Panc1 (cell line): ENCODE measurements at regions of chr2 and their contacts with region 1.

Region 1: DNA sequence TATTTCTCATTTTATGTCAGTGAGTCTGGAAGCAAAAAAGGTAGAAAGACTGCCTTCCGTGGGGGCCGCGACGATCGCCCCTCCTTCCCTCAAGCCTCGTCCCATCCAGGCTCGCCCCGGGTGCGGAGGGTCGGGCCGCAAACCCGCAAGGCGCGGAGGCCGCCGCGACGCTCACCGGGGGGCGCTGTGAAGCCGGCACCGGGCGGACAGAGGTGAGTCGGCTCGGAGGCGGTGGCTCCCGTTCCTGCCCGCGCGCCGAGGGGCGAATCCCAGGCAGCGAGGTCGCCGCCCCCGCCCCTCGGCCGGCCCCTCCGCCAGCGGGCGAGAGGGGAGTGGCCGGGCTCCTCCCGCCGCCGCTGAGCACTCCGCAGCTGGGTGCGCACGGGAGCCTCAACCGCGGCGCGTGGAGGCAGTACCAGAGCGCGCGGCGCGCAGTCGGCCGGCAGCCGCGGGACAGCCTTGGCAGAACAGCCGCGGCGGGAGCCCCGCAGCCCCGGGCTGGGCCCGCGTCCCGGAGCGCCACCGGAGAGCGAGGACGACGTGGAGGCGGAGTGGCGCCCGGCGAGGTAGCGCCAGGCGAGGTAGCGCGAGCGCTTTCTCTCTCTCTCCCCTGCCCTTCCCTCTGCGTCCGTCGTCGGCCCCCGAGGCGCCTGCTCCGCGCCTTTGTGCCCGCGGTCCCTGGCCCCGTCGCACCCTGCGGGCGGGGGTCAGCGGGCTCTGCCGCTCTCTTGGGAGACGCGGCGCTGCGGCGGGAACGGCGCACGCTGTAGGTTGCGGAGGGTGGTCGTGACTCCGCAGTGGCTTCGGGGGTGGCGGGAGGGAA is at the start of gene MYO1B:
- DNase-seq: no peak
- ATAC-seq: peak; percentile 94
- H3K4me3 ChIP-seq: peak within 1 kb of the TSS; percentile 83
- H3K27ac ChIP-seq: peak within 1 kb of the TSS; percentile 86
- H3K4me1 ChIP-seq: peaks cover 35% of the 10 kb centered on the region
- H3K27me3 ChIP-seq: no peaks in the 10 kb centered on the region
- CTCF ChIP-seq: peak; percentile 91
- total RNA-seq, gene MYO1B: 51.5 TPM

Region 2: GRCh38 chr2:189762551-189763298 is 1482.5 kb before region 1 on chr2 and contains the start of gene OSGEPL1:
- CTCF ChIA-PET with region 1: no interaction called
- POLR2A ChIA-PET with region 1: interaction called, 10 read pairs
- in situ Hi-C with region 1: no loop called
- intact Hi-C with region 1: no loop called
- DNase-seq: peak; percentile 88
- ATAC-seq: peak; percentile 99
- H3K4me3 ChIP-seq: peak within 1 kb of the TSS; percentile 82 to 90
- H3K27ac ChIP-seq: peak within 1 kb of the TSS; percentile 99
- H3K4me1 ChIP-seq: peaks cover 11% of the 10 kb centered on the region; the same call in 1 of the 2 replicates
- H3K27me3 ChIP-seq: no peaks in the 10 kb centered on the region
- CTCF ChIP-seq: peak; percentile 73
- total RNA-seq, gene OSGEPL1: 6.3 TPM

Region 3: DNA sequence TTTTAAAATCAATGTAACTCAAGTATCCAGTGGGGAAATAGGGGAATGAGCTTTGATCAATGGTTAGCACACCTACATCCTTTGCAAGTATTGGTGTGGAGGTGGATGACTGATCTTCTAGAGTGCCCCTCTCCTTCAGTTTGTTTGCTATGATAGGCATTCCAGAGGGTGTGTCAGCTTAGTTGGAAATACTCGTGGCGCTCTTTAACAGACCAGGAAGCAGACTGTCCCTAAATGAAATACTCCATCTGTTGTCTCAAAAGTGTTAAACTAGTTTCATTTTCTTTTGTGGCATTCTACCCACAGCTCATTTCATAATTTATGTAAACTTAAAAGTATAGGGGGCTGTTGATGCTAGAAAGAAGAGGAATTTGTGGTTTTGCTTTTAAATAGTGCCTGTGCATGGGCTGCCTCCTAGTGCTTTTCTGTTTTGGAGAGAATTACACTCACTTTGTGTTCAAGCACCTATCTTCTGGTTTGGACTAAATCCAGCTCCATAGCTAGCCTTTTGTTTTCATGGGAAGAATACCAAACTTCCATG is 297.5 kb before region 1 on chr2:
- CTCF ChIA-PET with region 1: no interaction called
- POLR2A ChIA-PET with region 1: no interaction called
- in situ Hi-C with region 1: no loop called
- intact Hi-C with region 1: no loop called
- DNase-seq: no peak
- ATAC-seq: peak; percentile 39; the same call in 1 of the 2 replicates
- H3K4me3 ChIP-seq: no peak overlapping the region
- H3K27ac ChIP-seq: no peak overlapping the region; the same call in 1 of the 2 replicates
- H3K4me1 ChIP-seq: peaks cover 8% of the 10 kb centered on the region; the same call in 1 of the 2 replicates
- H3K27me3 ChIP-seq: no peaks in the 10 kb centered on the region
- CTCF ChIP-seq: no peak

Region 4: GRCh38 chr2:191202881-191203397 is 42.3 kb before region 1 on chr2:
- CTCF ChIA-PET with region 1: no interaction called
- POLR2A ChIA-PET with region 1: no interaction called
- in situ Hi-C with region 1: no loop called
- intact Hi-C with region 1: no loop called
- DNase-seq: no peak
- ATAC-seq: no peak
- H3K4me3 ChIP-seq: no peak overlapping the region
- H3K27ac ChIP-seq: no peak overlapping the region
- H3K4me1 ChIP-seq: no peaks in the 10 kb centered on the region
- H3K27me3 ChIP-seq: no peaks in the 10 kb centered on the region
- CTCF ChIP-seq: no peak

Region 5: DNA sequence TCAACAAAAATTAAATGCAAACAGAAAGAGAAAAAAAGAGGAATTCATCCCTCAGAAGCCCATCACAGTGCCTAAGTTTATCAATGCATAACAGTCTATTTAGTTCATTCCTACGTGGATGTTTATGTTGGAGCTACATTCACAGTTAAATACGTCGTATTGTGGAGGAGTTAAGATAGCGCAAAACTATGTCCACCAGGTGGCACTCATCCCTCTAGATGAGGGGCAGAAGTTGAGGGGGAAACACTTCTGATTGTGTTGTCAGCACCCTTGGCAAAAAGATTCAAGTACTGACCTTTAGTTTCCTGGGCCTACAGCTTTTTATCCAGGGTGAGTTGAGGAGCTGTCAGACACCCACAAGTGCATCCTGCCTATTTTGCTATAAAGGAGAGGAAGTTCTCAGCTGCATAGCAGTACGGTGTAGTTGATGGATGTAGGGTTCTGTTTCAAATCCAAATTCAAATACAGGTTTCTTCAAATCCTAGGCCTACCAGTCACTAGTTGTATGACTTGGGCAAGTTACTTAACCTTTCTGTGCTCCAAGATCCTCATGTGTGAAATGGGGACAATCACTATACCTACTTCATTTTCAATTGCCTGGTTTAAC is 26.9 kb before region 1 on chr2:
- CTCF ChIA-PET with region 1: interaction called, 8 read pairs
- POLR2A ChIA-PET with region 1: no interaction called
- in situ Hi-C with region 1: no loop called
- intact Hi-C with region 1: loop called (anchors 2 kb)
- DNase-seq: peak; percentile 88
- ATAC-seq: peak; percentile 75
- H3K4me3 ChIP-seq: no peak overlapping the region
- H3K27ac ChIP-seq: peak overlapping the region; percentile 75
- H3K4me1 ChIP-seq: peaks cover 10% of the 10 kb centered on the region
- H3K27me3 ChIP-seq: no peaks in the 10 kb centered on the region
- CTCF ChIP-seq: peak; percentile 80

Region 6: GRCh38 chr2:191255756-191256312 is 10.6 kb after region 1 on chr2:
- CTCF ChIA-PET with region 1: interaction called, 12 read pairs
- POLR2A ChIA-PET with region 1: no interaction called
- in situ Hi-C with region 1: no loop called
- intact Hi-C with region 1: no loop called
- DNase-seq: no peak
- ATAC-seq: peak; percentile 61
- H3K4me3 ChIP-seq: no peak overlapping the region
- H3K27ac ChIP-seq: 0 out of 2 replicates have a peak overlapping the region, but pooled peaks have one; percentile 17
- H3K4me1 ChIP-seq: peaks cover 15% of the 10 kb centered on the region
- H3K27me3 ChIP-seq: no peaks in the 10 kb centered on the region
- CTCF ChIP-seq: no peak

Region 7: GRCh38 chr2:191748059-191748461 is 502.8 kb after region 1 on chr2:
- CTCF ChIA-PET with region 1: no interaction called
- POLR2A ChIA-PET with region 1: no interaction called
- in situ Hi-C with region 1: no loop called
- intact Hi-C with region 1: no loop called
- DNase-seq: no peak
- ATAC-seq: no peak
- H3K4me3 ChIP-seq: no peak overlapping the region
- H3K27ac ChIP-seq: no peak overlapping the region
- H3K4me1 ChIP-seq: no peaks in the 10 kb centered on the region
- H3K27me3 ChIP-seq: no peaks in the 10 kb centered on the region; the same call in 1 of the 2 replicates
- CTCF ChIP-seq: no peak

Region 8: DNA sequence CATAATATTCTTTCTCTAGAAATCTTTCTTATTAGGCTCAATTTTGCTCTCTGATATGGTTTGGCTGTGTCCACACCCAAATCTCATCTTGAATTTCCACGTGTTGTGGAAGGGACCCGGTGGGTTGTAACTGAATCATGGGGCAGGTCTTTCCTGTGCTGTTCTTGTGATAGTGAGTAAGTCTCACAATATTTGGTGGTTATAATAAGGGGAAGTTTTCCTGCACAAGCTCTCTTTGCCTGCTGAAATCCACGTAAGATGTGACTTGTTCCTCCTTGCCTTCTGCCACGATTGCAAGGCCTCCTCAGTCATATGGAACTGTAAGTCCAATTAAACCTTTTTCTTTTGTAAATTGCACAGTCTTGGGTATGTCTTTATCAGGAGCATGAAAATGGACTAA is 527.9 kb after region 1 on chr2:
- CTCF ChIA-PET with region 1: no interaction called
- POLR2A ChIA-PET with region 1: no interaction called
- in situ Hi-C with region 1: no loop called
- intact Hi-C with region 1: no loop called
- DNase-seq: no peak
- ATAC-seq: no peak
- H3K4me3 ChIP-seq: no peak overlapping the region
- H3K27ac ChIP-seq: no peak overlapping the region
- H3K4me1 ChIP-seq: no peaks in the 10 kb centered on the region
- H3K27me3 ChIP-seq: no peaks in the 10 kb centered on the region
- CTCF ChIP-seq: no peak